ENCODE measurements at regions of chr15 and their contacts with region 1.

Region 1: GRCh38 chr15:74906446-74907162 is at the start of gene FAM219B:
- DNase-seq: peak; percentile 75
- H3K4me3 Mint-ChIP-seq: peak within 1 kb of the TSS; percentile 91
- H3K27ac Mint-ChIP-seq: peak within 1 kb of the TSS; percentile 88
- H3K4me1 Mint-ChIP-seq: peaks cover 33% of the 10 kb centered on the region
- H3K27me3 Mint-ChIP-seq: no peaks in the 10 kb centered on the region
- total RNA-seq, gene FAM219B: 82.1 and 95.2 TPM in 2 replicates

Region 2: DNA sequence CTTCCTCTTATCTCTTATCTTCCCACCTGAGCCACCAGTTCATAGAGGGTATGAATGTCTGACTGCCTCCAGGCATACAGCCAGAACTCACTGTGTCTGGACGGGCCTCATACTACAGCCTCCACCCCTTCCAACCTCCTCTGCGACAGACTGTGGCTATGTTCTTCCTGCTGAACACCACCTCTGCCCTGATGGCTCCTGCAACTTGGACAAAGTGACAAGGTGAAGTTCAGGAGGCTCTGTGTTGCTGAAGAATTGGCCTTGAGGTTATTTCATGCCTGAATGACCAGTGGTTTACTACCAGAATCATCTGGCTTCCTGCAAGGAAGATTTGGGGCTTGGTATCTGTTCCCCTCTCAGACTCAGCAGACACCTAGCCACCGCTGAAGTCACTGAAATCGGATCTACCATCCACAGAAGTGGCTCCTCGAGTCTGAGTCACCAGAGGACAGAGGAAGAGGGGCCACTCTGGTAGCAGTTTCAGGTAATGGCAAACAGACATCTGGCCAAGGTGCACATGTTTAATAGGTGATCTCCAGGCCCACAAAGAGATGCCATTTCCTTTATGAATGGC is 49.4 kb before region 1 on chr15:
- intact Hi-C with region 1: loop called (anchors 5 kb)
- DNase-seq: no peak
- H3K4me3 Mint-ChIP-seq: no peak overlapping the region
- H3K27ac Mint-ChIP-seq: peak overlapping the region; percentile 36
- H3K4me1 Mint-ChIP-seq: peaks cover 28% of the 10 kb centered on the region
- H3K27me3 Mint-ChIP-seq: no peaks in the 10 kb centered on the region

Region 3: GRCh38 chr15:74889883-74890664 is 16.5 kb before region 1 on chr15 and contains the start of gene MPI:
- intact Hi-C with region 1: loop called (anchors 2 kb)
- DNase-seq: peak; percentile 82
- H3K4me3 Mint-ChIP-seq: peak within 1 kb of the TSS; percentile 82
- H3K27ac Mint-ChIP-seq: peak within 1 kb of the TSS; percentile 81
- H3K4me1 Mint-ChIP-seq: peaks cover 36% of the 10 kb centered on the region
- H3K27me3 Mint-ChIP-seq: no peaks in the 10 kb centered on the region
- total RNA-seq, gene MPI: 66.3 and 71.6 TPM in 2 replicates

Region 4: GRCh38 chr15:74920456-74920855 is 13.9 kb after region 1 on chr15:
- intact Hi-C with region 1: no loop called
- DNase-seq: no peak
- H3K4me3 Mint-ChIP-seq: no peak overlapping the region
- H3K27ac Mint-ChIP-seq: no peak overlapping the region
- H3K4me1 Mint-ChIP-seq: peaks cover 10% of the 10 kb centered on the region
- H3K27me3 Mint-ChIP-seq: no peaks in the 10 kb centered on the region

Region 5: DNA sequence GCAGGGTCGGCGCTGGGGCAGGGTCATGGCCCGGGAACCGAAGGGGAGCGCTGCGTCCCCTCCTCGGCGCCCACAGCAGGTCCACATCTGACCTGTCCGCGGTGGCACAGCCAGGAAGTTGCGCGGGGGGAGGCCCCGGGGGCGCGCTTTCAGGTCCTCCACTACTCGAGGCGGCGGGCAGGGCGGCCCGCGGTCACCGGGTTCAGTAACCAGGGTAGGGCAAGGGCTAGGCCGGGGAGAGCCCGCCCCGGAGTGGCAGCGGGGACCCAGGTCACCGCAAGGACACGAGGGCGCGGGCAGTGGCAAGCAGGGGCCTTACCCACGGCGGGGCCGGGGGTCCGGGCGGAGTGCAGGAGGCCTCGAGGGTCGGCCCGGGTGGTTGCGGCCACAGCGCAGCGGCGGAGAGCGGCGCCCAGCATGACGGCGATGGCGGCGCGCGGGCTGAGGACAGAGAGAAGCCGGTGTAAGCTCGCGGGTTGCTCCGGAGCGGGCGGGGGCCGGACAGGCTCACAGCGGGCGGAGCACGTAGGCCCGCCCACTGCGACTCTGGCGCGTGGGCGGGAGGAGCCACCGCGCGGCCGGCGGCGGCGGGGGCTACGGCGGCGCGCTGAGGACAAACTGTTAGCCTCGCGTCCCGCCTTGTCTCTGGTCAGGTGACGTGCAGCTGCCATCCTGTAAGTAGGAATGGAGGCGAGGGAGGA is 31.1 kb after region 1 on chr15 and contains the start of gene COX5A:
- intact Hi-C with region 1: loop called (anchors 5 kb)
- DNase-seq: peak; percentile 92
- H3K4me3 Mint-ChIP-seq: peak within 1 kb of the TSS; percentile 85
- H3K27ac Mint-ChIP-seq: peak within 1 kb of the TSS; percentile 90
- H3K4me1 Mint-ChIP-seq: peaks cover 20% of the 10 kb centered on the region
- H3K27me3 Mint-ChIP-seq: no peaks in the 10 kb centered on the region
- total RNA-seq, gene COX5A: 311 and 333 TPM in 2 replicates

Region 6: DNA sequence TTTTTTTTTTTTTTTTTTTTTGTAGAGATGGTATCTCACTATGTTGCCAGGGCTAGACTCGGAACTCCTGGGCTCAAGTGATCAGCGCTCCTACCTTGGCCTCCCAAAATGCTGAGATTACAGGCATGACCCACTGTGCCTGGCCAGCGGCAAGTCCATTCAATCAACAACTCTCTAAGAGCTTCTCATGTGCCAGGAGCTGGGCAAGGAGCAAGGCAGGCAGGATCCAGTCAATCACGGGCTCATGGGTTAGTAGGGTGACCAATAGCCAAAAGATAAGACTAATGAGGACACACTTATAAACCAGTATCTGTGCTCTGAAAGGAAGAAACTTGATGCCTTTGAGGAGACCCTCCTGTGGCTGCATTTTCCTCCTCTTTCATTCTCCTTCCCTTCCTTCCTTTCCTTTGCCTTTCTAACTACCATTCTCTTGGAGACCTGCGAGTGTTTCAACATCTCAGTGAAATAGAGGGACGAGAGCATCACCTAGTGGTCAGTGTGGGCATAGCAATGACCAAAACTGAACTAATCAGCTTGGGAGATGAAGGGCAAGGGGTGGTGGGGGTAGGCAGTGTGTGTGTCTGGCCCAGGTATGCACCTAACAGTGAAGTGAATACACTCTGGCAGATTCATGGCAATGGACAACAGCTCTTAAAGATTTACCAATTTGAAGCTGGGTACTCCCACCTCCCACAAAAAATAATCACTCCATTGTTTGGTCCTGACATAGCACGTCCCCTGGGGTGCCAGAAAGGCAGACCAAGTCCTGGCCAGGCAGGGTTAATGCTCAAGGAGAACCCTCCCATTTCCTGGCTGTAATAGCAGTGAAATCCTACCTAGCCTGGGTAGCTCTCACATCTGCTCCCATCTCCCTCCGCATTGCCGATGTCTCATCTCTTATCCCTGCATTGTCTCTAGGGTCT is 43.7 kb after region 1 on chr15:
- intact Hi-C with region 1: loop called (anchors 5 kb)
- DNase-seq: peak; percentile 71
- H3K4me3 Mint-ChIP-seq: no peak overlapping the region
- H3K27ac Mint-ChIP-seq: no peak overlapping the region
- H3K4me1 Mint-ChIP-seq: peaks cover 10% of the 10 kb centered on the region
- H3K27me3 Mint-ChIP-seq: peaks cover 2% of the 10 kb centered on the region